Right cardiac atrium (tissue), 5 donors: ENCODE measurements at regions of chr22 and their contacts with region 1.

Region 1: GRCh38 chr22:35582861-35583670 is 34.1 kb downstream of the MB start:
- DNase-seq: peak; percentile 45 to 79 (median 77)
- ATAC-seq: peak in 1 of 2 donors; percentile 58
- H3K4me3 ChIP-seq: no peak overlapping the region
- H3K27ac ChIP-seq: no peak overlapping the region
- H3K4me1 ChIP-seq: peaks cover 3% of the 10 kb centered on the region
- H3K27me3 ChIP-seq: no peaks in the 10 kb centered on the region

Region 2: DNA sequence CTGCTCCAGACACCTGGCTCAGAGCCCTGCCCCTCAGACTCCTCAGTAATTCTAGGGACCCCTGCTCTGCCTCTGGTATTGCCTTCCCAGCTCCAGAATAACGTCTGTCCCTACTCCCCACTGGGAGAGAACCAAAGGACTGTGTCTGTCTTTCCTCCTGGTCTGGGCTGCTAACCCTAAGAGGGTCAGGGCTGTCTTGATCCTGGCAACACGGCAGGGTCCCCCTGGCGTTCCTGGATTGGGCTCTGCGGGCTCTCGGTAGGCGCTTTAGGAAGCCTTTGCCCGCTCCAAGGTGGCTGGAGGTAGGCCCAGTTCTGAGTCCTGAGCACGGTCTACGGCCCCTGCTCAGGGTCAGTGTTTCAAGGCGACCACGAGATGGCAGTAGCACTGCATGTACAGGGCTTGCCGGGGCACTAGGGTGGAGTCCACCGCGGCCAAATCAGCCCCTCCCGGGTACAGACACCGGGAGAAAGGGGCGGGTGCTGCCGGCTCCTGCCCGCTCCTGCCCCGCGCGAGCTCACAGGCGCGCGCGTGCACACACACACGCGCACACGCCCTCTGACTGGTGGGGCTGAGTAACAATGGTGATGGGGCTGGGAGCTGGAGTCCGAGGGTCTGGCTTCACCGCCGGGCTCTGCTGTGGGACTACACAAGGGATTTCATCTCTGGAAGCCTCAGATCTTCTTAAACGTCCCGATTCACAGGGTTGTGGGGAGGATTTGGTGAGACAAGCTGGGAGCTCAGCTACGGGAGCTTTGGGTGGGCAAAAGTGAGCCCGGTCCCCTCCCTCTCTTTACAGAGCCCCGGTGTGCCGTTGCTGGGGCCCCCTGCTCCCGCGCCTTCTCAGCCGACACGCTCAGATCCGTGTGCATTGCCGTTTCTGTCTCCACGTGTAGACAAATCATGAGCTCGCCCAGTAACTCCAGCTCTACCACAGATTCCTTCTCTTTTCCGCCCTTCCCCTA is 232.2 kb before region 1 on chr22:
- intact Hi-C with region 1: loop called in 3 of 4 experiments (anchors 5 to 10 kb)
- DNase-seq: peak; percentile 94 to 96 (median 95)
- ATAC-seq: peak; percentile 90
- H3K4me3 ChIP-seq: peak overlapping the region; percentile 47
- H3K27ac ChIP-seq: peak overlapping the region; percentile 25
- H3K4me1 ChIP-seq: peaks cover 2% of the 10 kb centered on the region
- H3K27me3 ChIP-seq: no peaks in the 10 kb centered on the region

Region 3: GRCh38 chr22:35430897-35431322 is 152.2 kb before region 1 on chr22:
- intact Hi-C with region 1: loop called (anchors 2 to 5 kb)
- DNase-seq: peak; percentile 90 to 96 (median 95)
- ATAC-seq: peak; percentile 96 to 98
- H3K4me3 ChIP-seq: no peak overlapping the region
- H3K27ac ChIP-seq: no peak overlapping the region
- H3K4me1 ChIP-seq: no peaks in the 10 kb centered on the region
- H3K27me3 ChIP-seq: no peaks in the 10 kb centered on the region

Region 4: GRCh38 chr22:35568751-35569725 is 14.0 kb before region 1 on chr22:
- intact Hi-C with region 1: no loop called
- DNase-seq: peak in 1 of 3 donors; percentile 10
- ATAC-seq: peak in 1 of 2 donors; percentile 39
- H3K4me3 ChIP-seq: no peak overlapping the region
- H3K27ac ChIP-seq: no peak overlapping the region
- H3K4me1 ChIP-seq: peaks cover 8% of the 10 kb centered on the region
- H3K27me3 ChIP-seq: no peaks in the 10 kb centered on the region